Heart left ventricle (tissue), 16 donors: ENCODE measurements at regions of chr16 and their contacts with region 1.

Region 1: GRCh38 chr16:83967806-83968305 is at the start of gene NECAB2:
- DNase-seq: peak in 4 of 5 donors; percentile 58 to 75 (median 65)
- ATAC-seq: peak in 2 of 4 donors; percentile 30 to 40
- H3K4me3 ChIP-seq: peak within 1 kb of the TSS in 10 of 12 donors; percentile 26 to 56 (median 44)
- H3K27ac ChIP-seq: no peak within 1 kb of the TSS
- H3K4me1 ChIP-seq: peaks cover 0 to 9% (median 0%) of the 10 kb centered on the region in 12 donors
- H3K27me3 ChIP-seq: peaks cover 0 to 10% (median 0%) of the 10 kb centered on the region in 9 donors
- CTCF ChIP-seq: peak; percentile 36 to 81 (median 68)
- POLR2A ChIP-seq: no peak
- total RNA-seq, gene NECAB2: 0.24 to 1.3 (median 0.77) TPM in 7 of 9 donors, not detected in the others

Region 2: DNA sequence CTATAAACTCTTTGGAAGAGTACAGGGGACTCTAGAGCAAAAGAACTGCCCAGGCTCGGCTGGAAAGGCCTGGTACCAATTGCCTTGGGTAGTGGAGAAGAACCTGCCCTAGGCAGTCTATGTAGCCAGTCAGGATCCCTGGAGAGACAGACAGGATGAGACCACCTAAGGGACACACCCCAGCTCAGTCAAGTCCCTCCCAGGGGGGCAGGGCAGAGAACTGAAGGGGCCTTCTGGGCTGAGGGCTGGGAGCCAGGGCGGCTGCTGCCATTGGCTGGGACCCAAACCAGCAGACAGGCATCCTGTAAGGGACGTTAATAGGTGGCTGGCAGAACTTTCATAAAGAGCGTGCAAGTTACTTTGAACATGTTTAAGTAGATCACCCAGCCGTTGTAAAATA is 87.5 kb after region 1 on chr16:
- intact Hi-C with region 1: loop called in 4 of 10 experiments (anchors 5 kb)
- DNase-seq: peak in 4 of 5 donors; percentile 53 to 77 (median 66)
- ATAC-seq: peak; percentile 62 to 82 (median 68)
- H3K4me3 ChIP-seq: no peak overlapping the region
- H3K27ac ChIP-seq: peak overlapping the region in 10 of 12 donors; percentile 2 to 88 (median 51)
- H3K4me1 ChIP-seq: peaks cover 0 to 57% (median 28%) of the 10 kb centered on the region in 12 donors
- H3K27me3 ChIP-seq: no peaks in the 10 kb centered on the region
- CTCF ChIP-seq: no peak
- POLR2A ChIP-seq: no peak

Region 3: GRCh38 chr16:84062734-84063640 is 95.1 kb after region 1 on chr16:
- intact Hi-C with region 1: loop called (anchors 1 to 5 kb)
- DNase-seq: peak; percentile 73 to 85 (median 80)
- ATAC-seq: peak; percentile 60 to 85 (median 85)
- H3K4me3 ChIP-seq: no peak overlapping the region
- H3K27ac ChIP-seq: peak overlapping the region in 5 of 12 donors; percentile 11 to 46 (median 31)
- H3K4me1 ChIP-seq: peaks cover 0 to 24% (median 12%) of the 10 kb centered on the region in 12 donors
- H3K27me3 ChIP-seq: no peaks in the 10 kb centered on the region
- CTCF ChIP-seq: peak; percentile 74 to 93 (median 88)
- POLR2A ChIP-seq: no peak

Region 4: GRCh38 chr16:84156342-84156784 is 188.5 kb after region 1 on chr16:
- intact Hi-C with region 1: no loop called
- DNase-seq: no peak
- ATAC-seq: no peak
- H3K4me3 ChIP-seq: no peak overlapping the region
- H3K27ac ChIP-seq: no peak overlapping the region
- H3K4me1 ChIP-seq: no peaks in the 10 kb centered on the region
- H3K27me3 ChIP-seq: peaks cover 0 to 16% (median 4%) of the 10 kb centered on the region in 9 donors
- CTCF ChIP-seq: peak in 2 of 12 donors; percentile 9
- POLR2A ChIP-seq: no peak

Region 5: DNA sequence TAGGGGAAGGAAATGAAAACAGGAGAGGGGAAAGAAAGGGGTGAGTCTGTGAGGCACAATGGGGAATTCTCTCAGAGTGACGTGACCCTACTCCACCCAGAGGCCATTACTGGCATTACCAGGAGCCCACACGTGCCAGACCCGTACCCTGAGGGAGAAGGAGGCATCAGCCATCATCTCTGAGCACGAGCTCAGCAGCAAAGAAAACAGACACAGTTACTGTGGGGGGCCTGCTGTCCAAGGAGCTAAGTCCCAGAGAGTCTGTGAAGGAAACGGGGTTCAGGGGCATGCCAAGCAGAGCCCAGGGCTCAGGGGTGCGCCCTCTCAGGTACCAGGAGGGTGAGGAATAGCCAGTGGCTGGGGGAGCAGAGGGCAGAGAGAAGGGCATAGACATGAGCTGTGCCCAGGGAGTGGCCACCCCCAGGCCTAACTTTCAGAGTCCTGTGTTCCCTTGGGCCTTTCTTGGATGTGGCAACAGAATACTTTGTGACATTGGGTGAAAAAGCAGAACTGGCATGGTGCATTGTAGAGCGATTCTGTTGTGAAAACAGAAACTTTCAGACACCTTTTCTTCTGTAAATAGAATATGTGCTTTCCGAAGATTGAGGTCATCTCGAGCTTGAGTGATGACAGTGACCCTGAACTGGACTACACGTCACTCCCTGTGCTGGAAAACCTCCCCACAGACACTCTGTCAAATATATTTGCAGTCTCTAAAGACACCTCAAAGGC is 207.7 kb after region 1 on chr16:
- intact Hi-C with region 1: loop called in 3 of 10 experiments (anchors 5 to 10 kb)
- DNase-seq: peak in 2 of 5 donors; percentile 55 to 57
- ATAC-seq: peak; percentile 43 to 70 (median 52)
- H3K4me3 ChIP-seq: no peak overlapping the region
- H3K27ac ChIP-seq: peak overlapping the region in 9 of 12 donors; percentile 8 to 85 (median 83)
- H3K4me1 ChIP-seq: peaks cover 7 to 55% (median 36%) of the 10 kb centered on the region in 12 donors
- H3K27me3 ChIP-seq: no peaks in the 10 kb centered on the region
- CTCF ChIP-seq: peak in 10 of 12 donors; percentile 34 to 85 (median 68)
- POLR2A ChIP-seq: no peak

Region 6: DNA sequence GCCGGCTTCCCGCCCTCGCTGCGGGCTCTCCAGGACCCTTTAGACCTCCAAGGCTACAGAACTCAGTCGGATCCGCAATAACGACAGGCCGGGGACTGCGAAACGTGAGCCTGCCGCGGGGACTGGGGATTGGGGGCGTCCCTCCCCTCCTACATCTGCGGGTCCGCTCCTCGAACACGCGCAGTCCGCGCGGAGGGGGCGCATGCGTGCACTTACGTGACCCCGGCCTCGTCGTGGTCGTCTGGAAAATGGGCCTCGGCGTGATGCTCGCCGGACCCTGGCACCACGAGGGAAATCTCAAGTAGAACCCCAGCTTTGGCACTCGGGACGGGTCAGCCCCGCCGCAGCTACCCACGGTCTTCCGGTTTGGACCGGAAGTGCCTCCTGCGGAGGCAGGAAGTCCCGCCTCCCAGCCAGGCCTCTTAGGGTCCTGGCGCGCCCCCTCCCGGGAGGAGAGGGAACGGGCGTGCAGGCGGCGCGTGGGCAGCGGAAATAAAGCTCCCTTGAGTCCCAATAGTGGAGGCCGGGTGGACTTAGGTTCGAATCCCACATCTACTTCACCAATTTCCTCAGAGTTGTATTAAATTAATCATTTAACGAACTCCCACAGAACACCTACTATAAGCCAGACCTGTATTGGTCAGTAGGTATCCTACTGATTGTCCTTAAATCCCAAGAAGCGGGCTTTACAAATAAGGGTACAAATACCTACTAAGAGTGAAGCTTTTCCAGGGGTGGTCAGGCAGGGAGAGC is 219.0 kb after region 1 on chr16 and contains the start of gene TAF1C:
- intact Hi-C with region 1: loop called in 1 of 10 experiments (anchors 5 kb)
- DNase-seq: peak; percentile 90 to 95 (median 92)
- ATAC-seq: peak; percentile 82 to 95 (median 94)
- H3K4me3 ChIP-seq: peak within 1 kb of the TSS; percentile 62 to 100 (median 87)
- H3K27ac ChIP-seq: peak within 1 kb of the TSS; percentile 56 to 90 (median 82)
- H3K4me1 ChIP-seq: peaks cover 0 to 45% (median 16%) of the 10 kb centered on the region in 12 donors
- H3K27me3 ChIP-seq: no peaks in the 10 kb centered on the region
- CTCF ChIP-seq: peak in 11 of 12 donors; percentile 92 to 99 (median 98)
- POLR2A ChIP-seq: peak in 1 of 2 donors; percentile 46
- total RNA-seq, gene TAF1C: 16.3 to 24.3 (median 21.8) TPM

Region 7: DNA sequence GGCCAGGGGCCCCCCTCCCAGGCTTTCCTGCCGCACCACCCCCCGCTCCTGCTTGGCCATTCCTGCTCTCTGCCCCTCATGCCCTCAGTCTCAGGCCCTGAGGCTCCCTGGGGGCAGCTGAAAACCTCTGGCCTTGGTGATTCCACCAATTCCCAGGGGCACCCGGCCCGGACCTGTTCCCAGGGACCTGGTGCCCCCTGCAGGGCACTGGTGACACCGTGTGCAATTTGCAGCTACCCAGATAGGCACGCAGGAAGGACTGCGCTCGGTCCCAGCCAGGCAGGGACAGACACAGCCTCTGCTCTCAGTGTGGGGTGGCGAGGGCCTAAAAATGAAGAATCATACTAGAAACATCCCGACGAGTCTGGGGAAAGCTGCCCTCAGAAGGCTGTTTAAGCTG is 340.3 kb after region 1 on chr16:
- intact Hi-C with region 1: loop called in 1 of 10 experiments (anchors 10 kb)
- DNase-seq: peak; percentile 24 to 67 (median 58)
- ATAC-seq: peak; percentile 51 to 76 (median 74)
- H3K4me3 ChIP-seq: no peak overlapping the region
- H3K27ac ChIP-seq: no peak overlapping the region
- H3K4me1 ChIP-seq: peaks cover 0 to 13% (median 0%) of the 10 kb centered on the region in 12 donors
- H3K27me3 ChIP-seq: peaks cover 2 to 29% (median 10%) of the 10 kb centered on the region in 9 donors
- CTCF ChIP-seq: peak; percentile 34 to 66 (median 54)
- POLR2A ChIP-seq: no peak